Heart right ventricle (tissue), 16 donors: ENCODE measurements at regions of chr12 and their contacts with region 1.

Region 1: GRCh38 chr12:123853396-123854068 is 91.4 kb downstream of the DNAH10 start:
- DNase-seq: no peak
- ATAC-seq: no peak
- H3K4me3 ChIP-seq: no peak overlapping the region
- H3K27ac ChIP-seq: no peak overlapping the region
- H3K4me1 ChIP-seq: no peaks in the 10 kb centered on the region
- H3K27me3 ChIP-seq: peaks cover 0 to 24% (median 9%) of the 10 kb centered on the region in 7 donors
- CTCF ChIP-seq: no peak

Region 2: GRCh38 chr12:123923927-123924326 is 70.4 kb after region 1 on chr12:
- intact Hi-C with region 1: loop called in 1 of 10 experiments (anchors 2 kb)
- DNase-seq: no peak
- ATAC-seq: no peak
- H3K4me3 ChIP-seq: no peak overlapping the region
- H3K27ac ChIP-seq: no peak overlapping the region
- H3K4me1 ChIP-seq: no peaks in the 10 kb centered on the region
- H3K27me3 ChIP-seq: peaks cover 0 to 7% (median 0%) of the 10 kb centered on the region in 7 donors
- CTCF ChIP-seq: no peak

Region 3: DNA sequence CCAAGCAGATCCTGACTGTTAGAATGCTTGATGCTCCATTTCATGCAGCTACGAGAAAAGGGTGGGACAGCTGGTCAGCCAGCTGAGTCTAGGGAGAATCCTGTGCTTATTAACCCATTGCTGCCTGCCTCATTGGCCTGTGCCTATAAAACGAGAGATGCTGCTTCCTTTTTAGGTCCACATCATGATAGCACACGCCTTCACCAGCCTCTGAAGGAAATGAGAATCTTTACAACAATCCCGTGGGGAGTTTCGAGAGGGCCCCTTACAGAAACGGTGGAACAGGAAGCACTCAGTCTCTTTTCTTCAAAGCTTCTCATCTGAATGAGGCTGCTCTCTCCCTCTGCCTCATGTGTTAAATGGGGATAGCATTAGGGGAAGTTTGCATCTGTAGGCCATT is 294.0 kb after region 1 on chr12:
- intact Hi-C with region 1: no loop called
- DNase-seq: no peak
- ATAC-seq: no peak
- H3K4me3 ChIP-seq: no peak overlapping the region
- H3K27ac ChIP-seq: no peak overlapping the region
- H3K4me1 ChIP-seq: no peaks in the 10 kb centered on the region
- H3K27me3 ChIP-seq: peaks cover 0 to 16% (median 0%) of the 10 kb centered on the region in 7 donors
- CTCF ChIP-seq: no peak

Region 4: GRCh38 chr12:124294780-124295241 is 441.3 kb after region 1 on chr12 and contains the start of gene RFLNA:
- intact Hi-C with region 1: no loop called
- DNase-seq: no peak
- ATAC-seq: peak in 6 of 8 donors; percentile 31 to 76 (median 60)
- H3K4me3 ChIP-seq: peak within 1 kb of the TSS in 9 of 10 donors; percentile 25 to 52 (median 42)
- H3K27ac ChIP-seq: no peak within 1 kb of the TSS
- H3K4me1 ChIP-seq: peaks cover 0 to 32% (median 19%) of the 10 kb centered on the region in 9 donors
- H3K27me3 ChIP-seq: peaks cover 0 to 53% (median 32%) of the 10 kb centered on the region in 7 donors
- CTCF ChIP-seq: no peak
- total RNA-seq, gene RFLNA: 0.13 to 0.49 (median 0.37) TPM in 4 of 10 donors, not detected in the others